Activated CD4-positive, alpha-beta T cell treated with anti-CD3 and anti-CD28 coated beads, Interleukin-2, amount 10 ng/mL, durations not matched to agents 24 days and 14 days (primary cell): ENCODE measurements at regions of chr4 and their contacts with region 1.

Region 1: GRCh38 chr4:73662709-73663546 is 42.7 kb upstream of the RASSF6 start:
- DNase-seq: no peak
- H3K4me3 Mint-ChIP-seq: no peak overlapping the region
- H3K27ac Mint-ChIP-seq: no peak overlapping the region
- H3K4me1 Mint-ChIP-seq: peaks cover 3% of the 10 kb centered on the region
- H3K27me3 Mint-ChIP-seq: peaks cover 3% of the 10 kb centered on the region

Region 2: GRCh38 chr4:73690051-73690738 is 27.3 kb after region 1 on chr4:
- intact Hi-C with region 1: no loop called
- DNase-seq: no peak
- H3K4me3 Mint-ChIP-seq: no peak overlapping the region
- H3K27ac Mint-ChIP-seq: no peak overlapping the region
- H3K4me1 Mint-ChIP-seq: no peaks in the 10 kb centered on the region
- H3K27me3 Mint-ChIP-seq: peaks cover 2% of the 10 kb centered on the region

Region 3: DNA sequence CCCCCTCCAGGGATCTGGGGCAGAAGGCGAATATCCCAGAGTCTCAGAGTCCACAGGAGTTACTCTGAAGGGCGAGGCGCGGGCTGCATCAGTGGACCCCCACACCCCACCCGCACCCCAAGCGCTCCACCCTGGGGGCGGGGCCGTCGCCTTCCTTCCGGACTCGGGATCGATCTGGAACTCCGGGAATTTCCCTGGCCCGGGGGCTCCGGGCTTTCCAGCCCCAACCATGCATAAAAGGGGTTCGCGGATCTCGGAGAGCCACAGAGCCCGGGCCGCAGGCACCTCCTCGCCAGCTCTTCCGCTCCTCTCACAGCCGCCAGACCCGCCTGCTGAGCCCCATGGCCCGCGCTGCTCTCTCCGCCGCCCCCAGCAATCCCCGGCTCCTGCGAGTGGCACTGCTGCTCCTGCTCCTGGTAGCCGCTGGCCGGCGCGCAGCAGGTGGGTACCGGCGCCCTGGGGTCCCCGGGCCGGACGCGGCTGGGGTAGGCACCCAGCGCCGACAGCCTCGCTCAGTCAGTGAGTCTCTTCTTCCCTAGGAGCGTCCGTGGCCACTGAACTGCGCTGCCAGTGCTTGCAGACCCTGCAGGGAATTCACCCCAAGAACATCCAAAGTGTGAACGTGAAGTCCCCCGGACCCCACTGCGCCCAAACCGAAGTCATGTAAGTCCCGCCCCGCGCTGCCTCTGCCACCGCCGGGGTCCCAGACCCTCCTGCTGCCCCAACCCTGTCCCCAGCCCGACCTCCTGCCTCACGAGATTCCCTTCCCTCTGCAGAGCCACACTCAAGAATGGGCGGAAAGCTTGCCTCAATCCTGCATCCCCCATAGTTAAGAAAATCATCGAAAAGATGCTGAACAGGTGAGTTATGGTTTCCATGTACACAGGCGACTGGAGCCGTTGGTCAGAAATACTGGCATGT is 206.5 kb after region 1 on chr4 and contains the start of gene CXCL1:
- intact Hi-C with region 1: loop called (anchors 10 kb)
- DNase-seq: no peak
- H3K4me3 Mint-ChIP-seq: peak within 1 kb of the TSS; percentile 30
- H3K27ac Mint-ChIP-seq: no peak within 1 kb of the TSS
- H3K4me1 Mint-ChIP-seq: no peaks in the 10 kb centered on the region
- H3K27me3 Mint-ChIP-seq: peaks cover 35% of the 10 kb centered on the region
- total RNA-seq, gene CXCL1: not detected in 2 replicates